Naive thymus-derived CD4-positive, alpha-beta T cell (primary cell): ENCODE measurements at regions of chr4 and their contacts with region 1.

Region 1: GRCh38 chr4:153466081-153466948 is at the start of gene TMEM131L:
- DNase-seq: peak; percentile 63 to 77 (median 69)
- ATAC-seq: peak; percentile 91
- H3K4me3 ChIP-seq: peak within 1 kb of the TSS; percentile 75
- H3K4me3 Mint-ChIP-seq: peak within 1 kb of the TSS; percentile 94 to 100 (median 96)
- H3K27ac ChIP-seq: peak within 1 kb of the TSS; percentile 91
- H3K27ac Mint-ChIP-seq: peak within 1 kb of the TSS; percentile 93 to 99 (median 98)
- H3K4me1 ChIP-seq: peaks cover 29 to 32% of the 10 kb centered on the region in 2 donors
- H3K4me1 Mint-ChIP-seq: peaks cover 32 to 61% (median 44%) of the 10 kb centered on the region in 7 donors
- H3K27me3 ChIP-seq: no peaks in the 10 kb centered on the region
- H3K27me3 Mint-ChIP-seq: no peaks in the 10 kb centered on the region
- total RNA-seq, gene TMEM131L: 45.8 to 111 (median 97.7) TPM

Region 2: GRCh38 chr4:153249199-153250041 is 216.9 kb before region 1 on chr4:
- CTCF ChIA-PET with region 1: no interaction called
- POLR2A ChIA-PET with region 1: no interaction called
- intact Hi-C with region 1: loop called in 1 of 2 experiments (anchors 10 kb)
- DNase-seq: peak; percentile 81 to 91 (median 86)
- ATAC-seq: peak; percentile 98
- H3K4me3 ChIP-seq: peak overlapping the region; percentile 62
- H3K4me3 Mint-ChIP-seq: peak overlapping the region; percentile 85 to 96 (median 92)
- H3K27ac ChIP-seq: peak overlapping the region; percentile 80
- H3K27ac Mint-ChIP-seq: peak overlapping the region; percentile 81 to 98 (median 96)
- H3K4me1 ChIP-seq: peaks cover 3 to 10% of the 10 kb centered on the region in 2 donors
- H3K4me1 Mint-ChIP-seq: peaks cover 7 to 44% (median 26%) of the 10 kb centered on the region in 7 donors
- H3K27me3 ChIP-seq: no peaks in the 10 kb centered on the region
- H3K27me3 Mint-ChIP-seq: peaks cover 0 to 11% (median 0%) of the 10 kb centered on the region in 5 donors

Region 3: DNA sequence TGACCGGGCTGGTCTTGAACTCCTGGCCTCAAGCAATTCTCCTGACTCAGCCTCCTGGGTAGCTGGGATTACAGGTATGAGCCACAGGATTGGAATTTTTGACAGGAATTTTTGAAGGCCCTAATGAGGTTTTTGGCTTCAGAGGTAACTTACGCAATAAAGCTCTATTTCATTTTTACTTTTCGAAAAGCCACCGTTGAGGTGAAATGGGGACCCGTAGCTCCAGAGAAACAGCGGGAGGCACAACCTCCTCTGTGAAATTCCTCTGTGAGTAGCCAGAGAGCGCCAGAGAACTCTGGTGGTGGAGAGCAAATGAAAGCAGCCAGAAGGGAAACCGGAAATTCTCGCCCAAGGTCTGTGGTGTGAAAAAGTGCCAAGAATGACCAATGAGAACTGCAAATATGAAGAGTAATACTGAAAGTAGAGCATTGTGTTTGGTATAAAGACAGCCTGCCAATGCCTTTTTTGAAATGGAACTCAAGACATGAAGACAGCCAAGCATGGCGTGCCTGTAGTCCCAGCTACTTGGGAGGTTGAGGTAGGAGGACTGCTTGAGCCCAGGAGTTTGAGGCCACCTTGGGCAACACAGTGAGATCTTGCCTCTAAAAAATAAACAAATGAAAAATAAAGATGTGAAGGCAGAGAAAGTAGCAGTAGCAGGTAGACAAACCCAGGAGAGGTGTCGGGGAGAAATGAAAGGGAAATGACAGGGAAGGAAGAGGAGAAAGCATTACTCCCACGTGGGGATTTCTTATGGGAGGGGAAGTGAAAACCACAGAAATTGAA is 33.2 kb before region 1 on chr4:
- CTCF ChIA-PET with region 1: interaction called, 22 read pairs
- POLR2A ChIA-PET with region 1: interaction called, 48 read pairs
- intact Hi-C with region 1: loop called (anchors 1 kb)
- DNase-seq: peak; percentile 22 to 72 (median 59)
- ATAC-seq: peak; percentile 90
- H3K4me3 ChIP-seq: peak overlapping the region; percentile 65
- H3K4me3 Mint-ChIP-seq: peak overlapping the region; percentile 78 to 98 (median 87)
- H3K27ac ChIP-seq: peak overlapping the region; percentile 66
- H3K27ac Mint-ChIP-seq: peak overlapping the region; percentile 88 to 98 (median 96)
- H3K4me1 ChIP-seq: peaks cover 13 to 54% of the 10 kb centered on the region in 2 donors
- H3K4me1 Mint-ChIP-seq: peaks cover 31 to 83% (median 72%) of the 10 kb centered on the region in 7 donors
- H3K27me3 ChIP-seq: no peaks in the 10 kb centered on the region
- H3K27me3 Mint-ChIP-seq: no peaks in the 10 kb centered on the region

Region 4: GRCh38 chr4:153479101-153479500 is 12.8 kb after region 1 on chr4:
- CTCF ChIA-PET with region 1: interaction called, 9 read pairs
- POLR2A ChIA-PET with region 1: interaction called, 66 read pairs
- intact Hi-C with region 1: loop called in 1 of 2 experiments (anchors 1 kb)
- DNase-seq: no peak
- ATAC-seq: no peak
- H3K4me3 ChIP-seq: no peak overlapping the region
- H3K4me3 Mint-ChIP-seq: peak overlapping the region in 7 of 10 donors; percentile 17 to 67 (median 55)
- H3K27ac ChIP-seq: peak overlapping the region; percentile 41
- H3K27ac Mint-ChIP-seq: peak overlapping the region in 8 of 9 donors; percentile 41 to 98 (median 86)
- H3K4me1 ChIP-seq: peaks cover 5 to 60% of the 10 kb centered on the region in 2 donors
- H3K4me1 Mint-ChIP-seq: peaks cover 59 to 95% (median 80%) of the 10 kb centered on the region in 7 donors
- H3K27me3 ChIP-seq: no peaks in the 10 kb centered on the region
- H3K27me3 Mint-ChIP-seq: no peaks in the 10 kb centered on the region

Region 5: DNA sequence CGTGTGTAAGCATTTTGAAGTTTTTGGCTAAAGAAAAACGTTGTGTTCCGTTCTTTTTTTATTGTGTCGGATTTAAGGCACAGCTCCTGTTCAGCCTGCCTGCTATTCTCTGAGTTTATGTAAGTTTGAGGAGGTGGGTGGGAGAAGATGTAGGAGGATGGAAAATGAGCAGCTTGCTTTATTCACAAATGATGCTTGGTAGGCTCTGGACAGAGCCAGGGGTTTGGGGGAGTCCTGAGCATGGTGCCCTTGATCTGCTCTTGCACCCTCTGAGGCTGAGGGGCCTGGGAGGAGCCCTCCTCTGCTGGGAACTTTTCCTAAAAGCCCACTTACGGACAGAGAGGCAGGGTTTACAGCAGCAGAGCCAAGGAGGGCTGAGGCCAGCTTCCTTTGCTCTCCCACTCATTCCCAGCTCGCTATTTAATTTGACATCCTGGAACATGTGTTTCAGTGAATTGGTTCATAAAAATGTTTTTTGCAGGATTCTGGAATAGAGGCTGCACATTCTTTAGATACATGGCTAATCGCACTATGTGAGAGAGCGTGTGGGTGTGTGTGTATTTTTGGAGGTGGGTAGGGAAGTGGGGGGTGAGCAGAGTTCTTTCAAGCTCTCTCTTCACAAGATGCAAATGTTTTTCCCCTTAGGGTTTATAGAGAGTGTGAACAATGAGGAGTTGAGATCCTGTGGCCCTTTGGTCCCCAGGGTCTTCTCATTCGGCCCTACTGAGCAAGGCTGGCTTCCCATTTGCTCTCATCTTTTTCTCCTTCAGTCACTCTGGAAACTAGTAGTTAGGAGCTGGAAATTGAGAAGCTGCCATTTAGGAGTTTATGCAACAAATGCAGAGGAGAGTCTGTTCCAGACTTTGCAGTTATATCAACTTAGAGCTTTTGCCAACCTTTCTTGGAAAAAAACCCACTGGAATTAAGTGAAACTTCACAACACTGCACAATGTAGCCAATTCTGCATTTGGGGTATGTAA is 32.0 kb after region 1 on chr4:
- CTCF ChIA-PET with region 1: interaction called, 5 read pairs
- POLR2A ChIA-PET with region 1: interaction called, 93 read pairs
- intact Hi-C with region 1: loop called (anchors 1 kb)
- DNase-seq: peak in 4 of 9 donors; percentile 31 to 46 (median 44)
- ATAC-seq: peak; percentile 60
- H3K4me3 ChIP-seq: peak overlapping the region; percentile 20
- H3K4me3 Mint-ChIP-seq: peak overlapping the region; percentile 74 to 85 (median 80)
- H3K27ac ChIP-seq: peak overlapping the region; percentile 83
- H3K27ac Mint-ChIP-seq: peak overlapping the region; percentile 94 to 100 (median 98)
- H3K4me1 ChIP-seq: peaks cover 37 to 89% of the 10 kb centered on the region in 2 donors
- H3K4me1 Mint-ChIP-seq: peaks cover 72 to 99% (median 91%) of the 10 kb centered on the region in 7 donors
- H3K27me3 ChIP-seq: no peaks in the 10 kb centered on the region
- H3K27me3 Mint-ChIP-seq: no peaks in the 10 kb centered on the region

Region 6: DNA sequence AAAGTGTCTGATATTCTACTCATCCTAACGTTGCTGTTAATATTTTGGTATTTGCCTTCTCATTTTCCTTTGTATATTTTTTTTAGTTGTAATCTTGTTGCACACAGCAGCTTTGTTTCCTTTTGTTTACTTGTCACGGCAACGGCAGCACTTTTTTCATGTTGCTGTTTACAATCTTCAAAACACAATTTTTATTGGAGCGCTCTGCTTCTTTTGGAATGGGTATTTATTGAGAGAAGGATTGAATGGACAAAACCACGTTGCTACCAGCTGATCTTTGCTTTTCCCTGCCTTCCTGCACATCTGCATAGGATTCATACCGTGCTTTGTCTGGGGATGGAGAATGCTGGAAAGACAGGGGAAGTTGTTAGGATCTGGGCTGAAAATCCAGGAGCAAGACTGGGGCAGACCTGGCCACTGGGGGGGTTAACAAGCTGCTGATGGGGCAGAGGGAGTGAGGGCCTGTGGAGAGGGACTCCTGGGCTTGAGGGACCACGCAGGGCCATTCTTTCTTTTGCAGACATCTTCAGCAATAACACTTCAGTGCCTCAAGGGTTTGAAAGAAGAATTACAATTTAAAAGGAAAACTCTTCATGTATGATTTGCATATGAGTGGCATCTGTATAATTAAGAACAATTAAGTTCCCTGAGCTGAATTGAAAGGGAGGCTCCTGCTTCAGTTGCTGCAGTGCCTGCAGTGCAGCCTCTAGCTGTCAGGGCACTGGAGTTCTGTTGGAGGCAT is 69.6 kb after region 1 on chr4:
- CTCF ChIA-PET with region 1: interaction called, 5 read pairs
- POLR2A ChIA-PET with region 1: interaction called, 122 read pairs
- intact Hi-C with region 1: no loop called
- DNase-seq: peak in 2 of 9 donors; percentile 34 to 39
- ATAC-seq: peak; percentile 52
- H3K4me3 ChIP-seq: no peak overlapping the region
- H3K4me3 Mint-ChIP-seq: peak overlapping the region; percentile 16 to 79 (median 63)
- H3K27ac ChIP-seq: peak overlapping the region; percentile 62
- H3K27ac Mint-ChIP-seq: peak overlapping the region; percentile 80 to 98 (median 91)
- H3K4me1 ChIP-seq: peaks cover 29 to 87% of the 10 kb centered on the region in 2 donors
- H3K4me1 Mint-ChIP-seq: peaks cover 58 to 100% (median 94%) of the 10 kb centered on the region in 7 donors
- H3K27me3 ChIP-seq: no peaks in the 10 kb centered on the region
- H3K27me3 Mint-ChIP-seq: no peaks in the 10 kb centered on the region

Region 7: DNA sequence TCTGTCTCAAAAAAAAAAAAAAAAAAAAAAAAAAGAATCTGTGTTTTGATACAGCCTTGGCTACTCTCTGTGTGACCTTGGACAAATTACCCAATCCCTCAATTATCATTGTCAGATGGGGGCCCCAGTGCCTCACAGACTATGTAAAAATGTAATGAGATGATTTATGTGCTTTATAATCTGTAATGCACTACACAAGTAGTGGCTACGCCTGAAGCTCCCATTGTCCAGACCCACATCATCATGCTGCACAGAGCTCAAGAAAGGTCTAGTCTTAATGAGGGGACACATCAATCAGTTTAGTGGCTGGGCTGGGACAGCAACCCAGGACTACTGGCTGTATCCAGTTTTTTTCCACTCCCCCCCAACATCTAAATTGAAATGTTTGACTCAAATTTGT is 716.9 kb after region 1 on chr4:
- CTCF ChIA-PET with region 1: no interaction called
- POLR2A ChIA-PET with region 1: no interaction called
- intact Hi-C with region 1: no loop called
- DNase-seq: no peak
- ATAC-seq: no peak
- H3K4me3 ChIP-seq: no peak overlapping the region
- H3K4me3 Mint-ChIP-seq: no peak overlapping the region
- H3K27ac ChIP-seq: no peak overlapping the region
- H3K27ac Mint-ChIP-seq: no peak overlapping the region
- H3K4me1 ChIP-seq: no peaks in the 10 kb centered on the region
- H3K4me1 Mint-ChIP-seq: no peaks in the 10 kb centered on the region
- H3K27me3 ChIP-seq: no peaks in the 10 kb centered on the region
- H3K27me3 Mint-ChIP-seq: peaks cover 0 to 29% (median 17%) of the 10 kb centered on the region in 5 donors

Region 8: GRCh38 chr4:154406018-154406795 is 939.9 kb after region 1 on chr4:
- CTCF ChIA-PET with region 1: no interaction called
- POLR2A ChIA-PET with region 1: no interaction called
- intact Hi-C with region 1: no loop called
- DNase-seq: no peak
- ATAC-seq: peak; percentile 40
- H3K4me3 ChIP-seq: no peak overlapping the region
- H3K4me3 Mint-ChIP-seq: peak overlapping the region in 1 of 10 donors; percentile 5
- H3K27ac ChIP-seq: no peak overlapping the region
- H3K27ac Mint-ChIP-seq: no peak overlapping the region
- H3K4me1 ChIP-seq: no peaks in the 10 kb centered on the region
- H3K4me1 Mint-ChIP-seq: peaks cover 0 to 7% (median 7%) of the 10 kb centered on the region in 7 donors
- H3K27me3 ChIP-seq: no peaks in the 10 kb centered on the region
- H3K27me3 Mint-ChIP-seq: peaks cover 9 to 35% (median 27%) of the 10 kb centered on the region in 5 donors